Caco-2 (cell line): ENCODE measurements at regions of chr18 and their contacts with region 1.

Region 1: DNA sequence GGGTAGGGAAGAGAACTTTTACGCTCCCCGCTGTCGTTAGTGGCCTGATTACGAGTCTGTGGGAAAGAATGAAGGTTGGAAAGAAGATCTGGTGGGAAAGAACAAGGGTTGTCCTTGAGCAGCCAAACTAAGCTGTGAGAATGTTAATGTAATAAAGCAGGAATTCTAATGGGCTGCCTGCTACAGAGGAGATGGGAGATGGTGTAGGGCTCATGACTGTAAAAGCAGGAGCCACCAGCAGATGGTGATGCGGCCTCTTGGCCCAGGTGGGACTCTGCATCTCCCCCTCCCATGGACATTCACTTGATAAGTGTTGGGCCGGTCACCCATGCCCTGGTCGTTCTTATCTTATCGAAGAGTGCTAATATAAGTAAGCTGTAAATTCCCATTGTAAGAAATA is 150.0 kb downstream of the NEDD4L start:
- DNase-seq: peak; percentile 57 to 71
- H3K4me3 ChIP-seq: no peak overlapping the region
- H3K4me3 Mint-ChIP-seq: no peak overlapping the region
- H3K27ac Mint-ChIP-seq: peak overlapping the region; percentile 4
- H3K4me1 ChIP-seq: peaks cover 7% of the 10 kb centered on the region; the same call in 1 of the 2 replicates
- H3K4me1 Mint-ChIP-seq: peaks cover 14% of the 10 kb centered on the region
- H3K27me3 ChIP-seq: no peaks in the 10 kb centered on the region
- H3K27me3 Mint-ChIP-seq: no peaks in the 10 kb centered on the region
- CTCF ChIP-seq: peak; percentile 18 to 70

Region 2: DNA sequence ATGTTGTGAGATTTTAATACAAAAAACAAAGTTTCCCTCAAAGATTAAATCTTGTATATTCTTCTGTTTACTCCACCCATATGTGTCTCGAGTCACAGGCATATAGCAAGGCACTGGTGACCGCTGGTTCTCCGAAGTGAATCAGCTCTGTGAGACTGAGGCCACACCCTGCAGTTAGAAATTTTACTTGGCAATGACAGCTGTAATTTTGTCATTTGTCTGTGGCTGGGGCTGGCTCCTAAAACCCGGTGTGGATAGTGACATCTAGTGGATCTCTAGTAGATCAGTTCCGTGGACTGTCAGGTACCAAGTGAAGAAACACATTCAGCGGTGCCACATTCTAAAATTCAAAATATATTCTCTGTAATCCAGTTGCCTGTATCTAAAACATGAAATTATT is 128.0 kb after region 1 on chr18:
- CTCF ChIA-PET with region 1: interaction called, 6 read pairs
- POLR2A ChIA-PET with region 1: no interaction called
- intact Hi-C with region 1: loop called (anchors 1 kb)
- DNase-seq: peak; percentile 49 to 54
- H3K4me3 ChIP-seq: no peak overlapping the region
- H3K4me3 Mint-ChIP-seq: no peak overlapping the region
- H3K27ac Mint-ChIP-seq: no peak overlapping the region
- H3K4me1 ChIP-seq: 0 out of 2 replicates have a peak, but pooled peaks cover 4% of the 10 kb centered on the region
- H3K4me1 Mint-ChIP-seq: no peaks in the 10 kb centered on the region
- H3K27me3 ChIP-seq: no peaks in the 10 kb centered on the region
- H3K27me3 Mint-ChIP-seq: no peaks in the 10 kb centered on the region
- CTCF ChIP-seq: peak in 1 of 2 experiments; percentile 47